ENCODE measurements at regions of chr2 and their contacts with region 1.

Region 1: GRCh38 chr2:192162392-192163042 is 32.2 kb downstream of the TMEFF2 start:
- DNase-seq: no peak
- ATAC-seq: peak; percentile 94
- H3K4me3 ChIP-seq: no peak overlapping the region
- H3K27ac ChIP-seq: no peak overlapping the region
- H3K4me1 ChIP-seq: no peaks in the 10 kb centered on the region
- H3K27me3 ChIP-seq: peaks cover 0 to 2% of the 10 kb centered on the region in 2 experiments; a peak in 1 of 4 replicates
- CTCF ChIP-seq: peak; percentile 80 to 89 (median 83)
- EP300 ChIP-seq: no peak
- POLR2A ChIP-seq: no peak
- RAD21 ChIP-seq: peak; percentile 97

Region 2: DNA sequence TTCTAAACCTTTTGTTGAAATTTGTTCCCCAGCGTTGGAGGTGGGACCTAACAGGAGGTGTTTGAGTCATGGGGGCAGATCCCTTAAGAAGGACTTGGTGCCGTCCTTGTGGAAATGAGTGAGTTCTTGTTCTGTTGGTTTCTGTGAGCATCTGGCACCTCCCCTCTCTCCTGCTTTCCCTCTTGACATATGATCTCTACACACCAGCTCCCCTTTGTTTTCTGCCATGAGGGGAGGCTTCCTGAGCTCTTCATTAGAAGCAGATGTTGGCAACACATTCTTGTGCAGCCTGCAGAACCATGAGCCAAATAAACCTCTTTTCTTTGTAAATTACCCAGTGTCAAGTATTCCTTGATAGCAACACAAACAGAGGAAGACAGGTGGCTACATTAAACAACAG is 460.8 kb before region 1 on chr2:
- CTCF ChIA-PET with region 1: interaction called, 5 read pairs
- POLR2A ChIA-PET with region 1: no interaction called
- RAD21 ChIA-PET with region 1: interaction called, 4 read pairs
- SMC1A ChIA-PET with region 1: interaction called, 3 read pairs
- in situ Hi-C with region 1: no loop called
- intact Hi-C with region 1: loop called (anchors 10 kb)
- DNase-seq: no peak
- ATAC-seq: no peak
- H3K4me3 ChIP-seq: no peak overlapping the region
- H3K27ac ChIP-seq: no peak overlapping the region
- H3K4me1 ChIP-seq: no peaks in the 10 kb centered on the region
- H3K27me3 ChIP-seq: no peaks in the 10 kb centered on the region
- CTCF ChIP-seq: no peak
- EP300 ChIP-seq: no peak
- POLR2A ChIP-seq: no peak
- RAD21 ChIP-seq: no peak

Region 3: DNA sequence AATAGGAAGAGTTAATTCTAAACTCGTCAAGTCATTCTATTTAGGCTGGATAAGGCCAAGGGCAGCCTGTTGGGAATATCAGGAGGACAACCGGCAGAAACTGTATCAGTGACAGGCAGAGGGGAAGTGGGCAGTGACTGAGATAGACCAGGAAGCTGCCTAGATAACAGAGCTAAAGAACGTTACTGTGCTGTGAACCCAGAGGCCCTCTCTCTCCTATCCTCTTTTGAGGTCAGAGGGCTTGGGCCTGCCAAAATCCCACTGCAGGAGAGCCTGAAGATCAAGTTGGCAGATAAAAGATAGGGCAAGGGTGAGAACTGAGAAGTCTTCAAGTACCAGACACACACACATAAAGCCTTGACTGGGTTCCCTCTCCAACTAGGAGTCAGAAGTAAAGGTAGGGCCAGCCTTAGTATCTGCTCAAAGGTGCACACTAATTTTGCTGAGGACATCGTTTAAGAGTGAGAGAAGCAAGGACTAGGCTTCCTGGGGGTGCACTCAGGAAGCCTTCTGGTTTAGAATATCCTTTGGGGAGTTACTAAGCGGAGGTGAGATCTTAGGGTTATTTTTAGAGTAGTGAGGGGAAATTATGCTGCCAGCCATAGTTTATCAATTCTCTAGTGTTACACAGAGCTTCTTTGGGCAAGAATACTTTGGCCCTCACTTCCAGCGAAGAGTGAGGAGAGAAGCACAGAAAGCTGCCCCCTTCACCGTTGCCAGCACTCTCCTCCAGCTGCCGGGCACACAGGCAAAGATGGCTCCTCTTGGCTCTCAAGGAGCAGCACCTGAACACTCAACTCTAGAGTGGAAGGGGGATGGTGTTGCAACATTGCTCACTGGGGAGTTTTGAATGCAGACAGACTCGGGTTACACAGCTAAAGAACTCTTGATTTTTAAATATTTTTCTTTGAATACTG is 325.4 kb before region 1 on chr2:
- CTCF ChIA-PET with region 1: interaction called, 13 read pairs
- POLR2A ChIA-PET with region 1: no interaction called
- RAD21 ChIA-PET with region 1: interaction called, 8 read pairs
- SMC1A ChIA-PET with region 1: interaction called, 12 read pairs
- in situ Hi-C with region 1: no loop called
- intact Hi-C with region 1: no loop called
- DNase-seq: no peak
- ATAC-seq: peak; percentile 71
- H3K4me3 ChIP-seq: no peak overlapping the region
- H3K27ac ChIP-seq: no peak overlapping the region
- H3K4me1 ChIP-seq: no peaks in the 10 kb centered on the region
- H3K27me3 ChIP-seq: peaks cover 0 to 2% of the 10 kb centered on the region in 2 experiments; a peak in 3 of 4 replicates
- CTCF ChIP-seq: no peak
- EP300 ChIP-seq: no peak
- POLR2A ChIP-seq: no peak
- RAD21 ChIP-seq: no peak

Region 4: GRCh38 chr2:191869178-191869577 is 293.3 kb before region 1 on chr2:
- CTCF ChIA-PET with region 1: interaction called, 289 read pairs
- POLR2A ChIA-PET with region 1: interaction called, 3 read pairs
- RAD21 ChIA-PET with region 1: interaction called, 222 read pairs
- SMC1A ChIA-PET with region 1: interaction called, 244 read pairs
- in situ Hi-C with region 1: loop called (anchors 5 kb)
- intact Hi-C with region 1: loop called (anchors 1 kb)
- DNase-seq: peak; percentile 7
- ATAC-seq: peak; percentile 93
- H3K4me3 ChIP-seq: no peak overlapping the region
- H3K27ac ChIP-seq: no peak overlapping the region
- H3K4me1 ChIP-seq: no peaks in the 10 kb centered on the region
- H3K27me3 ChIP-seq: peaks cover 0 to 6% of the 10 kb centered on the region in 2 experiments; a peak in 2 of 4 replicates
- CTCF ChIP-seq: peak; percentile 35 to 63 (median 54)
- EP300 ChIP-seq: no peak
- POLR2A ChIP-seq: no peak
- RAD21 ChIP-seq: peak; percentile 61

Region 5: DNA sequence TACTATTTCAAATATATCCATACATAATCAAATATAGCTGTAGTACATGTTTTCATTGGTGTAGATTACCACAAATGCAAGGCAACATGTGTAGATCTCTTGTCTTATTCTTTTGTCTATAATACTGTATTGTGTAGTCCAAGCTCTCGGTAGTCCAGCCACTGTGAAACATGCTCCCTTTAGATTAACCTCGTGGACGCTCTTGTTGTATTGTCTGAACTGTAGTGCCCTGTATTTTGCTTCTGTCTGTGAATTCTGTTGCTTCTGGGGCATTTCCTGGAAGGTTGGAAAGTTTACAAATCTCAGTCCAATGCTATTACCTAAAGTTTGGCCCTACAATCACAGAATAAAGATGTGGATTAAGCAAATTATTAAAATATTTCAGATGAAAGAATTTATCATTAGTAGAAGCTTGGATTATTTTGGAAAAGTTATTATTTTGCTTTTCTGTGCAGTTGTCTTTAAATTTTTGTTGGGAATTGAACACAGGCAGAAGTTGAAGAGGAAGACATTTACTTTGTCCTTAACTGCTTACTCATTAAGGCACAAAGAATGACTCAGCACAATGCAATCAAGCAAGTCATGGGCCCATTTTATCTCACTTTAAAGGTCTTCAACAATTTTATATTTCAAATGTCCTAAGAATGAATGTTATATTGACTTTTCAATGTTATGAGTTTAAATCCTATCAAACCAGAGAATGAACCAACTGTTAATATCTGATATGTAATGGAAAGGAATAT is 212.2 kb before region 1 on chr2:
- CTCF ChIA-PET with region 1: interaction called, 13 read pairs
- POLR2A ChIA-PET with region 1: no interaction called
- RAD21 ChIA-PET with region 1: interaction called, 9 read pairs
- SMC1A ChIA-PET with region 1: interaction called, 8 read pairs
- in situ Hi-C with region 1: no loop called
- intact Hi-C with region 1: no loop called
- DNase-seq: no peak
- ATAC-seq: peak; percentile 59; the same call in 2 of the 3 replicates
- H3K4me3 ChIP-seq: no peak overlapping the region
- H3K27ac ChIP-seq: no peak overlapping the region
- H3K4me1 ChIP-seq: no peaks in the 10 kb centered on the region
- H3K27me3 ChIP-seq: no peaks in the 10 kb centered on the region
- CTCF ChIP-seq: no peak
- EP300 ChIP-seq: no peak
- POLR2A ChIP-seq: no peak
- RAD21 ChIP-seq: no peak

Region 6: GRCh38 chr2:192038110-192038509 is 124.4 kb before region 1 on chr2:
- CTCF ChIA-PET with region 1: no interaction called
- POLR2A ChIA-PET with region 1: no interaction called
- RAD21 ChIA-PET with region 1: no interaction called
- SMC1A ChIA-PET with region 1: no interaction called
- in situ Hi-C with region 1: no loop called
- intact Hi-C with region 1: no loop called
- DNase-seq: no peak
- ATAC-seq: no peak
- H3K4me3 ChIP-seq: no peak overlapping the region
- H3K27ac ChIP-seq: no peak overlapping the region
- H3K4me1 ChIP-seq: no peaks in the 10 kb centered on the region
- H3K27me3 ChIP-seq: no peaks in the 10 kb centered on the region
- CTCF ChIP-seq: no peak
- EP300 ChIP-seq: no peak
- POLR2A ChIP-seq: no peak
- RAD21 ChIP-seq: no peak

Region 7: DNA sequence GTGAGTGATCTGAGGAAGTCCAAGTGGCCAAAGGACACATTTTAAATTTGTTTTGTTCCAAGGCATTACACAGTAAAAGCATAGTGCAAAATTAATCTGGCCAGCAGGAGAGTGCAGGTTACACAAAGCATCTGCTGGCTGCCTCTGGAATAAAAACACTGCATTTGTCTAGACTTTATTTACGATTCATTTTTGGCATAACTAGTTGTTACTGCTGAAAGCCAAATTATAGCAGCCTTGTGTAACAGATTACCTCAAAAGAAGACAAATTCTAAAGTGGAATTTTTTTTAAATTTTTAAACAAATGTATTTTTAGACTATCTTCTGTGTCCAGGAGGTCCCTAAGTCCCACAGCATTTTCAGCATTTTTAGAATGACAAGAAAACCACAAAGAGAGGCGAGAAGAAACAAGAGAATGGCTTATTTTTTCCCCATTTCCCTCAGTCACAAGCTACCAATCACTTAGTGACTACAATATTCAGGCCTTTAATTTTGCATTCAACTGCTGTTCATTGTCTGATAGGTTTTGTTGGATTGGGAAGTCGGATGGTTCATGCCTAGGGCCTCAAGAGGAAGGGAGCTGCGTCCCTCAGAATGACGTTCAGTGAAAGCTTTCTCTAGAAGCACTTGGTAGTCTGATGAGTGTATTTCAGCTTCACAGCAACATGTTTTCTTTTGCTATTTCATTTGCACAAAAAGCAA is 13.7 kb before region 1 on chr2:
- CTCF ChIA-PET with region 1: interaction called, 15 read pairs
- POLR2A ChIA-PET with region 1: no interaction called
- RAD21 ChIA-PET with region 1: interaction called, 8 read pairs
- SMC1A ChIA-PET with region 1: interaction called, 7 read pairs
- in situ Hi-C with region 1: no loop called
- intact Hi-C with region 1: no loop called
- DNase-seq: no peak
- ATAC-seq: no peak
- H3K4me3 ChIP-seq: no peak overlapping the region
- H3K27ac ChIP-seq: no peak overlapping the region
- H3K4me1 ChIP-seq: no peaks in the 10 kb centered on the region
- H3K27me3 ChIP-seq: no peaks in the 10 kb centered on the region; a peak in 1 of 4 replicates
- CTCF ChIP-seq: no peak
- EP300 ChIP-seq: no peak
- POLR2A ChIP-seq: no peak
- RAD21 ChIP-seq: no peak

Measured in GM12878 (cell line).